ENCODE measurements at regions of chr10 and their contacts with region 1.

Region 1: DNA sequence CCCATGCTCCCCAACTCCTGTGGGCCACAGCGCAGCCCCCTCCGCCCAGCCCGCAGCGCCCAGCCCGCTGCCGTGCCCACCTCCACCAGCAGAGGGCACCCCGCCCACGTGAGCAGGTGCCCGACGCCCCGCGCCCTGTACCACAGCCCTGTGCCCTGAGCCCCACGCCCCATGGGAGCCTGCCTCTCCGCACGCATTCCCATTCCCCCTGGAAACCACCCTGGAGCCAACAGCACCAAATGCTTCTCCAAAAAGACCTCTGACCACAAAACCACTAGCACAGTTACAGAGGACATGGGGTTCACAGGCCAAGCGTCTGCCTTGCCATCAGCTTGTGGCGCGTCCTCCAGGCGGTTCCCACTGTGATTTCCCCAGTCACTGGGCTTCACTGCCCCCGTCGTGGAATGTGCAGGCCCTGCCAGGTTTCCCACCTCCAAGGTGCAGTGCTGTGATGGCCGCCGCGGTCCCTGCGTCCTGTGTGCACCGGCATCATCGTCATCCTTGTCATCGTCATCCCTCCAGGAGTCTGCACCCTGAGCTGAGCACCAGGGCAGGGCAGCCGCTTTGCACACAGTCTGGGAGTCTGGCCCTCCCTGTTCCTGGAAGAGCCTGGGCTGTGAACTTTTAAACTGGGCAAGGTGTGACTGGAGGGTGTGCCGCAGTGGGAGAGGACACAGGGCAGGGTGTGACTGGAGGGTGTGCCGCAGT is 61.7 kb downstream of the PWWP2B start:
- DNase-seq: peak in 3 of 4 donors; percentile 60 to 67 (median 67)
- ATAC-seq: peak; percentile 68
- H3K4me3 ChIP-seq: no peak overlapping the region
- H3K27ac ChIP-seq: no peak overlapping the region
- H3K4me1 ChIP-seq: peaks cover 34% of the 10 kb centered on the region
- H3K27me3 ChIP-seq: no peaks in the 10 kb centered on the region
- CTCF ChIP-seq: peak; percentile 79 to 98 (median 94)
- POLR2A ChIP-seq: no peak

Region 2: DNA sequence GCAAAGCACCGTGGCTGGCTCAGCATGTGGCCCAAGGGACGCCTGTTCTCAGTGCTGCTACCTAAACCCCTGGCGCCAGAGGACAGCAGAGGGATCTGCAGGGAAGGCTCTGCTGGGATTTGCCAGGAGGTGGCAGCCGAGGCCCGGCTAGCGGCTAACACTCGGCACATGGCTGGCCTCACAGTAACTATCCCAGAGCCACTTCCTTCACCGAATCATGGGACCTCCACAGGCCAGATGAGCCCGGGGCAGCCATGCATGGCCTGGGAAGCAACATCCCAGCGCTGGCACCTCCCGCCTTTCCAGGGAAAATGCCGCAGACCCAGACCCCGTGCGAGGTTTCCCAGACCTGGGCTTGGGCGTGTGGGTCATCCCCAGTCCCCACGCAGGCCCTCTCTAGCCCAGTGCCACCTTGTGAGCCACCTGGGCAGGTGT is 235.6 kb before region 1 on chr10:
- intact Hi-C with region 1: loop called (anchors 10 kb)
- DNase-seq: peak; percentile 76 to 86 (median 82)
- ATAC-seq: peak; percentile 83
- H3K4me3 ChIP-seq: no peak overlapping the region
- H3K27ac ChIP-seq: no peak overlapping the region
- H3K4me1 ChIP-seq: peaks cover 6% of the 10 kb centered on the region
- H3K27me3 ChIP-seq: no peaks in the 10 kb centered on the region
- CTCF ChIP-seq: peak; percentile 86 to 99 (median 94)
- POLR2A ChIP-seq: no peak

Region 3: DNA sequence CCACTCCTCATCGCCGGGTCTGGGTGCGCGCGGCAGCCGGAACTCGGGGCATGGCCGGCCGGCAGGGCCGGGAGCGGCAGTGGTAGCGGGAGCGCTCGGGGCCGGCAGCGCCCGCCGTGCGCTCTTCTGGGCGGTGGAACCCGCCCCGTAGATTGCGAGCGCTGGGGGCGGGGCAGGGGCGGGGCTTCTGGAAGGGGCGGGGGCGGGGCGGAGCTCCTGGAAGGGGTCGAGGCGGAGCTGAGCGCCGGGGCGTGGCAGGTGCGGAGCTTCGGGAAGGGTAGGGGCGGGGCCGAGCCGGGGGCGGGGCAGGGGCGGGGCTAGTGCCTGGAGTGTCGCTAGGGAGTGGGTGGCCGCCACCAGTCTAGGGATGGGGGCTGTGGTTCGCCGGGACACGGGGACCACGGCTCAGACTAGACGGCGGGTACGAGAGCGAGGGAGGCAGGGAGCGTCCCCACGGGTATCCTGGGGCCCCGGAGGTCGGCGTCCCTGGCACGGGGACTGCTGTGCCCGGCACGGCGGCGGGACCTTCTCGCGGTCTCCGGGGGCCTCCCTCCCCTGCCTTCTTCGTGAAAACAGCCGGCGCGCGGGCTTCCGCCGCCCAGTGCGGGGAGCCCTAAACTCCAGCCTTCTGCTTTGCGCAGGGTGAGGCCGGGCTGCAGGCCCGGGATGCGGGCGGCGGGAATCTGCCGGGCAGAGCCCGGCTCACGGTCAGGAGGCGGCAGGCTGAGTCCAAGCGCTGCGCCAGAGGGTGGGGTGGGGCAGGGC is 150.7 kb before region 1 on chr10 and contains the start of gene STK32C:
- intact Hi-C with region 1: loop called (anchors 10 kb)
- DNase-seq: peak; percentile 91 to 94 (median 94)
- ATAC-seq: peak; percentile 86
- H3K4me3 ChIP-seq: peak within 1 kb of the TSS; percentile 61 to 96
- H3K27ac ChIP-seq: peak within 1 kb of the TSS; percentile 55 to 73 (median 64)
- H3K4me1 ChIP-seq: peaks cover 30% of the 10 kb centered on the region
- H3K27me3 ChIP-seq: no peaks in the 10 kb centered on the region
- CTCF ChIP-seq: peak in 1 of 7 experiments; percentile 4
- POLR2A ChIP-seq: peak; percentile 17 to 57 (median 52)
- total RNA-seq, gene STK32C: 0.78 to 4.0 TPM

Region 4: DNA sequence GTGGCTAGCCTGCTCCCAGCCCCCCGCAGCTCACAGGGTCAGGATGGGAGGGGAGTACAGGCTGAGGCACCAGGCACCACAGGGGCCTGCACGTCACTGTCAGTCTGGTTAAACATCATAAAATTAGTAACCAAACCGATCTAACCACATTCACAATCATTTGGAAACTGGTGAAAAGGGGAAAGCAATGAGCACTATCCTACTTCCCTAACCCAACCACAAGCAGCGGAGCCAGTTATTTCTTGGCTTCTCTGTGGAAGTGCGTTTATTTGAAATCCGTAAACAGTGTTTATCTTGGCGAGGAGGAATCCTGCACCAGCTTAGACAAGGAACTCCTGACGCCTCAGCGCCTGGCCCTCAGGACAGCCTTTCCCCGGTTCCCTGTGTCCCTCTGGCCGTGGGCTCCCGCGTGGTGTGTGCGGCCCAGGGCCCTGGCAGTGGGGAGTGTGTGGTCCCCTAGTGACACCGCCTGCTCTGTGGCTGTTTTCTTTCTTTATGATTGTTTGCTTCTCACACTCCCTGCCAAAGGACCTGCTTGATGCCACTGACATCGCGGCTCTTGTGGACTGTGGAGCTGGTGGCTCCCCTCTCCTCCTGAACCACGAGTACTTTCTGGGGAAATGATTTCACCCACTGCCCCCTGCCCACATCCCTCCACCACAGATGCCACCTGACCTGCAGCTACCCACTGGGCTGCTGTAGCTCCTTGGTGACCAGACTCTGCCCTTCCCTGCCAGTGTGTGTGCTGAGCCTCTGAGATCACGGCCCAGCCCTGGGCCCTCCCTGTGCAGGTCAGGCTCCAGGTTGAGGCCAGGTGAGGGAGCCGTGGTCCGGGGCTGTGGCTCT is 116.8 kb after region 1 on chr10:
- intact Hi-C with region 1: loop called (anchors 5 kb)
- DNase-seq: peak in 3 of 4 donors; percentile 50 to 63 (median 55)
- ATAC-seq: peak; percentile 61
- H3K4me3 ChIP-seq: no peak overlapping the region
- H3K27ac ChIP-seq: peak overlapping the region; percentile 50 to 77 (median 68)
- H3K4me1 ChIP-seq: peaks cover 65% of the 10 kb centered on the region
- H3K27me3 ChIP-seq: no peaks in the 10 kb centered on the region
- CTCF ChIP-seq: no peak
- POLR2A ChIP-seq: peak in 1 of 3 donors; percentile 3

Region 5: DNA sequence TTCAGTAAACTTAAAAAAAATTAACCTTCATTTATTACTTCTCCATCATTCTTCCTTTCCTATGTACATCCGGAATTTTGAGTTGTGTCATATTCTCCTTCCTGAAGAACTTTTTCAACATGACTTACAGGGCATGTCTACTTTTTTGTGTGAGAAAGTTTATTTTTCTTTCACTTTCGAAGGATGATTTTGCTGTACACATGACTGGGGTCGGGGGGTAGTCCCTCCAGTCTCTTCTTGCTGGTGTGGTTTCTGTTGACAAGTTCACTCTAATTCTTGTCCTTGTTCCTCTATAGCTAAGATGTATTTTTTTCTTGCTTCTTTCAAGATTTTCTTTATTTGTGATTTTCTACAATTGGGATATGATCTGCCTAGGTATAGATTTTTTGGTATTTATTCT is 134.6 kb after region 1 on chr10:
- intact Hi-C with region 1: no loop called
- DNase-seq: no peak
- ATAC-seq: no peak
- H3K4me3 ChIP-seq: no peak overlapping the region
- H3K27ac ChIP-seq: no peak overlapping the region
- H3K4me1 ChIP-seq: peaks cover 35% of the 10 kb centered on the region
- H3K27me3 ChIP-seq: no peaks in the 10 kb centered on the region
- CTCF ChIP-seq: no peak
- POLR2A ChIP-seq: no peak

Region 6: DNA sequence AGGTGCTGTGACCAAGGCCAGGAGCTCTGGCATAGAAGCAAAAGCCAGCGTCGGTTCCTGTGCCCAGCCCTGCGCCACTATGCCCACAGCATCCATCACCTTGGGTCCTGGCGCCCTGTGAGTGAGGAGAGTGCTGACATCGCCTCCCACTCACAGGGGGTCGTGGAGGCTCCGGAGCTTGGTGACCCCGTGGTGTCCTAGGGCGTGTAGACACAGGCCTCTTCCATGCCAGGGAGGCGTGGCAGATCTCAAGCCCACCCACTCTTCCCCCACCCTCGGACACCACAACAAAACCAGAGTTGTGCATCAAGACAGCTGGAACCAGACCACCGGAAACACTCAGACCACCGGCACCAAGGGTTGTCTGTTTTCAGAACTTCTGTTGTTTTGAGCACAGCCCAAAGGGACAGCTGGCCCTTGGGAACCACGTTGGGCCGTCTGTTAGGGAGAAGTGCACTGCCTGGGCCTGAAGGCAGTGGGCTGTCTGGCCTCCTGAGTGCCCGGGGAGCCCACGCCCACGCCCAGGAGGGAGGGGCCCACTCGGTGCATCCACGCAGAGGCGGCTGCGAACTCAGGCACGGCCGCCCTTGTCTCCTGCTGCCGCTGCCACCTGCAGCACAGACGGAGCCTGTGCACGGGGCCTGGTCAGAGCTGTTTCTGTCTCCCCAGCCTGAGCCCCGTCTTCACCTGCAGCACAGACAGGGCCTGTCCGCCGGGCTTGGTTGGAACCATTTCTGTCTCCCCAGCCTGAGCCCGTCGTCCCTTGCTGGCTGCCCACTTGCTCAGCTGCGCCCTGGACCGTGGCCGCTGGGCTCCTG is 185.2 kb after region 1 on chr10:
- intact Hi-C with region 1: loop called (anchors 5 kb)
- DNase-seq: peak in 2 of 4 donors; percentile 8 to 9
- ATAC-seq: no peak
- H3K4me3 ChIP-seq: no peak overlapping the region
- H3K27ac ChIP-seq: no peak overlapping the region
- H3K4me1 ChIP-seq: no peaks in the 10 kb centered on the region
- H3K27me3 ChIP-seq: no peaks in the 10 kb centered on the region
- CTCF ChIP-seq: no peak
- POLR2A ChIP-seq: no peak